Prostate gland (tissue), 2 donors: ENCODE measurements at regions of chr10 and their contacts with region 1.

Region 1: DNA sequence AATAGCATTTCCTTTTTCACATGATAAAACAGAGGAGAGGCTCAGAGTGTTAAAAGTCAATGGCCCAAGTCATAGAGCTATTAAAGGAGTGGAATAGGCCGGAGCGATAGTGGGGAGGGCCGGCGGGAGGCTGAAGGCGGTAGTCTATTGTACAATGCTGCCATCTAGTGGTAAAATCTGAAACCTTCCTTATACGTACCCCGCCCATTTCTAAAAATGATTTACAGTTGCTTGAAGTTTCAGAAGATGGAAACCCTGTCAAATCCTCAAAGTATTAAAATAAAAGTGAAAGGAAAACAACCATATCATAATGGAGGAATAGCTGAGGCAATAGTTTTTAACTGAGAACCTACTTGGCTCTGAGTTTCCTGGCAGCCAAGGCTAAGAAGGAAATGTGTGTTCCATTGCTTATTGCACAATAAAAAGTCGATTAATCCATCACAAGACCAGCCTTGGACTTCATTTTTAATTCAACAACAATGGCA is 209.1 kb downstream of the CCSER2 start:
- DNase-seq: peak; percentile 54
- H3K4me3 ChIP-seq: no peak overlapping the region
- H3K27ac ChIP-seq: no peak overlapping the region
- H3K4me1 ChIP-seq: no peaks in the 10 kb centered on the region
- H3K27me3 ChIP-seq: no peaks in the 10 kb centered on the region
- CTCF ChIP-seq: peak; percentile 76 to 93 (median 89)
- POLR2A ChIP-seq: no peak

Region 2: DNA sequence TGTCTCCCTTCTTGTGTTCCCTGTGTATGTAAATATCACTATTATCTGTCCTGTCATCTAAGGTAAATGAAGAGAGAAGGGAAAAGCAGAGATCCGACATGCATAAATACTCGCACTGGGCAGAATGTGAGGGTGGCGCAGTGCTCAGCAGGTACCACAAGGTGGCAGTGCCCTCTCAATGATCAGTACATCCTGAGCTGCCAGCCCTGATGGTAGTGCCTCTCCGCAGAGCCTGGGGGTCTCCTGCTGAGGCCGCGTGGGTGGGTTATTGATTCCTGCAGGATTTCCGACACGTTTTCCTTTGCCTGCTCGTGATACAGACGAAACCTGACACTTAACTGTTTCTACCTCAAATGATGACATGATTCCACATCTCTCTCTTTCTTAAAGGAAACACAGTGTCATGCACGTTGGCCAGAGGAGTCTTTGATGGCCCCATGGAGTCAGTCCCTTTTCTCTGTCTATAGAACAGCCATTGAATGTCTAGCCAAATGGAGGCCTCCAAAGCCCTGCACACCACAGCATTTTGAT is 272.8 kb before region 1 on chr10:
- intact Hi-C with region 1: loop called (anchors 2 kb)
- DNase-seq: peak; percentile 64
- H3K4me3 ChIP-seq: no peak overlapping the region
- H3K27ac ChIP-seq: no peak overlapping the region
- H3K4me1 ChIP-seq: no peaks in the 10 kb centered on the region
- H3K27me3 ChIP-seq: no peaks in the 10 kb centered on the region
- CTCF ChIP-seq: peak; percentile 73 to 84 (median 81)
- POLR2A ChIP-seq: no peak

Region 3: DNA sequence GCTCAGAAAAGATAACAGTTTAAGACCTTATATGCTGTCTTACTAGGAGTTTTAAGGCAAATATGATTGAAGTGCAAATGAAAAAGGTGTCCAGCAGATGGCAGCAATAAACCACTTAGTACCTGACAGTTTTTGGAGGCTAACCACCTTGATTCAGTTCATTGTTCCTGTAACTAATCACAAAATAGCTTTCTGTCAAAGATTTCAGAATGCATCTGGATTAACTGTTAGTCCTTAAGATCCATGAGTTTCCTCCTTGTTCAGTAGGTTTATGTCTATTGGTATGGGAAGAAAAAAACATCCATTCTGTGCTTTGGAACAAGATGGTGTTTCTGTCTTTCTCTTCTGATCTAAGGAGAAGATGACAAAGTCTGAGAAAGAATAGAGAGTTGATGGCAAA is 162.5 kb before region 1 on chr10:
- intact Hi-C with region 1: loop called (anchors 1 kb)
- DNase-seq: peak; percentile 59
- H3K4me3 ChIP-seq: no peak overlapping the region
- H3K27ac ChIP-seq: no peak overlapping the region
- H3K4me1 ChIP-seq: no peaks in the 10 kb centered on the region
- H3K27me3 ChIP-seq: no peaks in the 10 kb centered on the region
- CTCF ChIP-seq: peak; percentile 55 to 86 (median 84)
- POLR2A ChIP-seq: no peak

Region 4: GRCh38 chr10:84429926-84430520 is 107.5 kb before region 1 on chr10:
- intact Hi-C with region 1: loop called (anchors 10 kb)
- DNase-seq: peak; percentile 23
- H3K4me3 ChIP-seq: no peak overlapping the region
- H3K27ac ChIP-seq: no peak overlapping the region
- H3K4me1 ChIP-seq: no peaks in the 10 kb centered on the region
- H3K27me3 ChIP-seq: no peaks in the 10 kb centered on the region
- CTCF ChIP-seq: peak in 3 of 4 experiments; percentile 15 to 47 (median 44)
- POLR2A ChIP-seq: no peak

Region 5: DNA sequence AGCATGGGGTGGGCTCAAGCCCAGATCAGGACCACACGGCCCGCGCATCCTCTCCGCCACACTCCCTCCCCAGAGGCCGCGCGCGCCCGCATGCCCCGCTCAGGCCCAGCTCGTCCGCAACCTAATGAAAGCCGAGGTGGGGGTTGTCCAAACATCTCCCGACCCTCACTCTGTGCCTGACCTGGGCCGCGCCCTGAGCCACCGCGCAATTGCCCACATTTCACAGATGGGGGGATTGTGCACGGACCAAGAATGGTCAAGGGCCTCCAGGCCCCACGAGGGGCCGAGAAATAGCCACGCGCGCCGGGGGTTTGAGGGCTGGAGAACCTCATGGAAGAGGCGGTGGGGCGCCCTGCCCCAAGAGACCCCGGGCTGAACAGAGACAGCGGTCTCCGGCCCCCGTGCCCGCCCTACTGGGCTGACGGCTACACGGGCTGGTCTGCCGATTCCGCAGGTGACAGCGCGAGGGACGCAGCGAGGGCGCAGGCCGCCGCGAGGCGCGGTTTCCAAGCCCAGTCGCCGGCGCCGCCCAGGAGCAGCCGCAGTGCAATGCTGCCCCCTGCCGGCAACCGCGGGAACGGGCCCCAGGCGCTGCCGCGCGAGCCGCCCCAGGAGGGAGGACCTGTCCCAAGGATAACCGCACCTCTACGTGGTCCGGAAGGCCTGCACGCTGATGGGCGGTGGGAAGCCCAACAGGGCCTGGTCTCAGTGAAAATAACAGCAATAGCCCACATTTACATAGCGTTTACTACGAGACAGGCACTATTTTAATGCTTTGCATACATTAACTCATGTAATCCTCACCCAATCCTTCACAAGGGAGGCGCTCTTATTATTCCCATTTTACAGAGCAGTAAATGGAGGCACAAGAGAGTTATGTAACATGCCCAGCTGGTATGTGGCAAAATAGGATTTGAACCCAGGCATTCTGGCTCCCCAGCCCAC is 1839.6 kb after region 1 on chr10:
- intact Hi-C with region 1: loop called (anchors 5 kb)
- DNase-seq: peak; percentile 55
- H3K4me3 ChIP-seq: no peak overlapping the region
- H3K27ac ChIP-seq: no peak overlapping the region
- H3K4me1 ChIP-seq: no peaks in the 10 kb centered on the region
- H3K27me3 ChIP-seq: no peaks in the 10 kb centered on the region
- CTCF ChIP-seq: peak; percentile 97 to 99 (median 98)
- POLR2A ChIP-seq: no peak